ENCODE measurements at regions of chr19 and their contacts with region 1.

Region 1: GRCh38 chr19:53792721-53793433 is 31.2 kb downstream of the NLRP12 start:
- DNase-seq: peak; percentile 90 to 95
- H3K4me3 ChIP-seq: no peak overlapping the region
- H3K27ac ChIP-seq: no peak overlapping the region
- H3K4me1 ChIP-seq: no peaks in the 10 kb centered on the region
- H3K27me3 ChIP-seq: no peaks in the 10 kb centered on the region
- CTCF ChIP-seq: peak; percentile 99

Region 2: DNA sequence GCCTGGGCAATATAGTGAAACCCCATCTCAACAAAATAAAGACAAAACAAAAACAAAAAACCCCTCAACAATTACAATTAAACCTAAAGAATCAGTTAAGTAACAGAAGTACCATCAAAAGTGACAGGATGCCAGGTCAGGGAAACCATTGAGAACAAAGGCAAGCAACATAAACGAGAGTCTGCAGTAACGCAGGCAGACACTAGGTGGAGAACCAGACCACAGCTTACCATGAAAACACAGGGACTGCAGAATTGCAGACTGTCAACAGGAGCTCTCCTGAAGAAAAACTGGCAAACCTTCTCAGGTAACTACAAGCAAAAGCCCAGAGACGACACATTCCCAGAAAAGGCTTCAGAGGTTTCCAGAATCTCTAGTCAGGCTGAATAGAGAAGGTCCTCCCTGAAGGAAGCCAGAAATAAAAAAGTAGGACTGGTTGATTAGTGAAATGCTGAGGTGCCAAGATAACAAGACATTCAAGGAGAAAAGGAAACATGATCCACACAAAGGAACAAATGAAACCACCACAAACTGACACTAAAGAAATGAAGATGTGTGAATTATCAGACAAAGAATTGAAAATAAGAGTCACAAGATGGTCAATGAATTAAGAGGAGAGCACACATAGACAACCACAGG is 597.5 kb before region 1 on chr19:
- CTCF ChIA-PET with region 1: interaction called, 3 read pairs
- POLR2A ChIA-PET with region 1: no interaction called
- intact Hi-C with region 1: loop called (anchors 5 kb)
- DNase-seq: peak; percentile 74 to 76
- H3K4me3 ChIP-seq: no peak overlapping the region
- H3K27ac ChIP-seq: no peak overlapping the region
- H3K4me1 ChIP-seq: peaks cover 8% of the 10 kb centered on the region
- H3K27me3 ChIP-seq: no peaks in the 10 kb centered on the region
- CTCF ChIP-seq: peak; percentile 97

Region 3: GRCh38 chr19:53597023-53597422 is 195.9 kb before region 1 on chr19:
- CTCF ChIA-PET with region 1: interaction called, 5 read pairs
- POLR2A ChIA-PET with region 1: no interaction called
- intact Hi-C with region 1: loop called (anchors 1 kb)
- DNase-seq: peak; percentile 90 to 91
- H3K4me3 ChIP-seq: no peak overlapping the region
- H3K27ac ChIP-seq: peak overlapping the region; percentile 40
- H3K4me1 ChIP-seq: peaks cover 15% of the 10 kb centered on the region
- H3K27me3 ChIP-seq: no peaks in the 10 kb centered on the region
- CTCF ChIP-seq: no peak

Region 4: DNA sequence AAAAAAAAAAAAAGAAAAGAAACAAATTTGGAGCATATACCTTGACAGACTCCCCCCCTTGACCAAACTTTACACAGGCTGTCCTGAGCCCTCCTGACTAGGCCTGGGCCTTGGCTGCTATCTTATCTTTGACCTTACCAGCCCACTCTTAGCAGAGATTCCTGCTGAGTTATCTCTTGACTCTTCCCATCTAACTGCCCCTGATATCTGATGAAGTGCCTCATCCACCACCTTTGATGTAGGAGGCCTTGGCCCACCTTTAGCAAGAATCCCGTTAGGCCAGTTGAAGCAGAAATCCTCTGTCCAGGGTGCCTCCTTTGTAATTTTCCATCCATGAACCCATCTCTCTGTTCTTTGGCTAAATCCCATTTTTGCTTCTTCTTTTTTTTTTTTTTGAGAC is 12.4 kb before region 1 on chr19:
- CTCF ChIA-PET with region 1: interaction called, 18 read pairs
- POLR2A ChIA-PET with region 1: no interaction called
- intact Hi-C with region 1: no loop called
- DNase-seq: no peak
- H3K4me3 ChIP-seq: no peak overlapping the region
- H3K27ac ChIP-seq: no peak overlapping the region
- H3K4me1 ChIP-seq: peaks cover 8% of the 10 kb centered on the region
- H3K27me3 ChIP-seq: no peaks in the 10 kb centered on the region
- CTCF ChIP-seq: no peak

Region 5: GRCh38 chr19:54029930-54030490 is 237.1 kb after region 1 on chr19:
- CTCF ChIA-PET with region 1: interaction called, 42 read pairs
- POLR2A ChIA-PET with region 1: no interaction called
- intact Hi-C with region 1: loop called (anchors 1 kb)
- DNase-seq: peak; percentile 65 to 68
- H3K4me3 ChIP-seq: no peak overlapping the region
- H3K27ac ChIP-seq: no peak overlapping the region
- H3K4me1 ChIP-seq: peaks cover 15% of the 10 kb centered on the region
- H3K27me3 ChIP-seq: no peaks in the 10 kb centered on the region
- CTCF ChIP-seq: peak; percentile 87

Region 6: GRCh38 chr19:54115109-54116063 is 322.5 kb after region 1 on chr19 and contains the starts of genes PRPF31 and TFPT:
- CTCF ChIA-PET with region 1: interaction called, 13 read pairs
- POLR2A ChIA-PET with region 1: no interaction called
- intact Hi-C with region 1: no loop called
- DNase-seq: peak; percentile 94 to 95
- H3K4me3 ChIP-seq: peak within 1 kb of the TSS; percentile 78
- H3K27ac ChIP-seq: peak within 1 kb of the TSS; percentile 63
- H3K4me1 ChIP-seq: peaks cover 14% of the 10 kb centered on the region
- H3K27me3 ChIP-seq: no peaks in the 10 kb centered on the region
- CTCF ChIP-seq: no peak
- total RNA-seq, gene PRPF31: 86.1 and 109 TPM in 2 replicates
- total RNA-seq, gene TFPT: 35.8 and 47.4 TPM in 2 replicates

Measured in PC-9 (cell line).